CD4-positive, alpha-beta T cell (primary cell): ENCODE measurements at regions of chr22 and their contacts with region 1.

Region 1: DNA sequence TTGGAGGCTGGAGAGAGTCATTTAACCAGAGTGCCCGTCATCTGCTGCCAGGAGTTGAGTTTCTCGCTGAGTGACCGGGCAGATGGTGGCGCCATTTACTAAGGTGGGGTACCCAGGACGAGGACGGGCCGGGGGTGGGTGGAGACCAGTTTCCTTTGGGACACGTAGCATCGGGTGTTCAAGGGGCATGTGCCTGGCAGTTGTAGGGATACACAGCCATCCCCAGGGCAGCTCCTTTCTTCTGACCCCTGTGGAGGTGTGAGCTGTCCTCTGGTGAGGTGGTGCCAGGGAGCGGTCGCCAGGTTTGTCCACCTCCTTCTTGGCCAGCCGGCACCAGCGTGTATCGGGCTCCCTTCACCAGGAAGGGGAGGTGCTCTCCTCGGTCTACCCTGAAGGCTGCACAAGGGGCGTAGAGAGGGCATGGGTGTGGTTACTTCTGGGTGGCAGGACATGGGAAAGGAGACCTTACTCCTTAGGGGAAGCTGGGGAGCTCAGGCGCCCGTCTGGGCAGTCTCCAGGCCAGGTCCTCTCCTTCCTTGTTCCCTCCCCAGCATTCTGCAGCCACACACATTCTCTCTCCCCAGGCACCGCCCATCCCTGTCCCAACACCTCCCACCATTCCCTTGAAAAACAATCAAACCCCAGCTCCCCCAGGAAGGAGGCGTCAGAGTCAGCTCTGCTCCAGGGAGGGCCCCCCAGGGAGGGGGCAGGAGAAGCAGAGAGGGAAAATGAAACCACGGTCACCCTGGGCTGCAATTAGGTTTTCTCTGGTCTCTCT is 10.3 kb upstream of the MB start:
- DNase-seq: peak; percentile 26 to 76 (median 45)
- ATAC-seq: peak; percentile 62
- H3K4me3 ChIP-seq: peak overlapping the region; percentile 54
- H3K4me3 Mint-ChIP-seq: peak overlapping the region; percentile 79
- H3K27ac ChIP-seq: no peak overlapping the region
- H3K27ac Mint-ChIP-seq: no peak overlapping the region
- H3K4me1 ChIP-seq: peaks cover 21% of the 10 kb centered on the region
- H3K4me1 Mint-ChIP-seq: peaks cover 23% of the 10 kb centered on the region
- H3K27me3 ChIP-seq: no peaks in the 10 kb centered on the region
- H3K27me3 Mint-ChIP-seq: peaks cover 9% of the 10 kb centered on the region
- CTCF ChIP-seq: peak; percentile 49

Region 2: GRCh38 chr22:35506259-35506570 is 121.2 kb before region 1 on chr22:
- CTCF ChIA-PET with region 1: no interaction called
- POLR2A ChIA-PET with region 1: no interaction called
- intact Hi-C with region 1: no loop called
- DNase-seq: no peak
- ATAC-seq: no peak
- H3K4me3 ChIP-seq: no peak overlapping the region
- H3K4me3 Mint-ChIP-seq: no peak overlapping the region
- H3K27ac ChIP-seq: no peak overlapping the region
- H3K27ac Mint-ChIP-seq: no peak overlapping the region
- H3K4me1 ChIP-seq: no peaks in the 10 kb centered on the region
- H3K4me1 Mint-ChIP-seq: no peaks in the 10 kb centered on the region
- H3K27me3 ChIP-seq: peaks cover 9 to 10% of the 10 kb centered on the region in 2 experiments
- H3K27me3 Mint-ChIP-seq: peaks cover 10% of the 10 kb centered on the region
- CTCF ChIP-seq: no peak

Region 3: DNA sequence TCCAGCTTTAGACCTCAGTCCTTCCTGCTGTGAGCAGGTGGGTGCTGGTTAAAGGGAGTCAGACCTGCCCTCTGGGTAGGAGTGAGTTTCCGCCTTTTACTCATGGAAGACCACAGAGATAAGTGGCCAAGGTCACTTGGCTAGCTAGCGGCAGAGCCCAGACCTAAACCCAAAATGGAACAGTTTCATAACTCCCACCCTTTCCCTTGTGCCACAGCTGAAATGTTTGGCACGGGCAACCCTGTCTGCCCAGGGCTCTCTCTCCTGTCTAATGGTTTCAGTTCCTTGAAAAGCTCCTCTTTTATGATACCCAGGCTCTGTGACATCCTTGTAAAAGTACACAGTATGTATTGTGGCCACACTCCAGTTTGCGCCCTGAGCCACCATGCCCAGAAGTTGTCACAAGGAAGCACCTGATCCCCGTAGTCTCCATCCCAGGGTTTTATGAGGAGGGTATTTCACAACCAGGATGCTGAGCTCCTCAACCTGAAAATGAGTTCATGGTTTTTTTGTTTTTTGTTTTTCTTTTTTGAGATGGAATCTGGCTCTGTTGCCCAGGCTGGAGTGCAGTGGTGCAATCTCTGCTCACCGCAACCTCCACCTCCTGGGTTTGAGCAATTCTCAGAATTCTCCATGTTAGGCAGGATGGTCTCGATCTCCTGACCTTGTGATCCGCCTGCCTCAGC is 15.4 kb before region 1 on chr22:
- CTCF ChIA-PET with region 1: no interaction called
- POLR2A ChIA-PET with region 1: no interaction called
- intact Hi-C with region 1: no loop called
- DNase-seq: no peak
- ATAC-seq: no peak
- H3K4me3 ChIP-seq: no peak overlapping the region
- H3K4me3 Mint-ChIP-seq: no peak overlapping the region
- H3K27ac ChIP-seq: no peak overlapping the region
- H3K27ac Mint-ChIP-seq: no peak overlapping the region
- H3K4me1 ChIP-seq: peaks cover 16% of the 10 kb centered on the region
- H3K4me1 Mint-ChIP-seq: no peaks in the 10 kb centered on the region
- H3K27me3 ChIP-seq: peaks cover 2 to 4% of the 10 kb centered on the region in 2 experiments
- H3K27me3 Mint-ChIP-seq: peaks cover 6% of the 10 kb centered on the region
- CTCF ChIP-seq: no peak

Region 4: GRCh38 chr22:35660291-35661127 is 33.1 kb after region 1 on chr22:
- CTCF ChIA-PET with region 1: no interaction called
- POLR2A ChIA-PET with region 1: interaction called, 3 read pairs
- intact Hi-C with region 1: loop called in 1 of 2 experiments (anchors 5 kb)
- DNase-seq: peak; percentile 47 to 91 (median 62)
- ATAC-seq: peak; percentile 89
- H3K4me3 ChIP-seq: peak overlapping the region; percentile 0
- H3K4me3 Mint-ChIP-seq: peak overlapping the region; percentile 30
- H3K27ac ChIP-seq: peak overlapping the region; percentile 92 to 93
- H3K27ac Mint-ChIP-seq: peak overlapping the region; percentile 98
- H3K4me1 ChIP-seq: peaks cover 57% of the 10 kb centered on the region
- H3K4me1 Mint-ChIP-seq: peaks cover 76% of the 10 kb centered on the region
- H3K27me3 ChIP-seq: no peaks in the 10 kb centered on the region
- H3K27me3 Mint-ChIP-seq: no peaks in the 10 kb centered on the region
- CTCF ChIP-seq: no peak

Region 5: DNA sequence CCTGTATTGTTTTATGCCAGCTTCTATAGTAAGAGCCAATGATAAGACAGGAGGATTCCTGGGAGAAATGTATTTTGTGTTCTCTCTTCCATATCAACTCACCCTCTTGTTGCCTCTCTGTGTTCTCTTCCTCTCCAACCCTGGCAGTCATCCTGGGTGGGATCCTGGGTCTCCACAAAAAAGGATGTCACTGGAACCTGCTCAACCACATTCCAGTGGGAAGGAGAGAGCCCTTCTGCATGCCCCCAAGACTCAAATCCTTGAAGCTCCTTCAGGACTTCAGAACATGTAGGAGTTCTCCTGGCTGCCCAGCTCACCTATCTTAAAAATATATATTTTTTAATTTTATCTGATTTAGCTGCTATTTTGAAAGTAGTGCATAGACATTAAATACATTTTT is 46.9 kb after region 1 on chr22:
- CTCF ChIA-PET with region 1: no interaction called
- POLR2A ChIA-PET with region 1: no interaction called
- intact Hi-C with region 1: no loop called
- DNase-seq: no peak
- ATAC-seq: no peak
- H3K4me3 ChIP-seq: no peak overlapping the region
- H3K4me3 Mint-ChIP-seq: no peak overlapping the region
- H3K27ac ChIP-seq: no peak overlapping the region
- H3K27ac Mint-ChIP-seq: no peak overlapping the region
- H3K4me1 ChIP-seq: no peaks in the 10 kb centered on the region
- H3K4me1 Mint-ChIP-seq: no peaks in the 10 kb centered on the region
- H3K27me3 ChIP-seq: no peaks in the 10 kb centered on the region
- H3K27me3 Mint-ChIP-seq: no peaks in the 10 kb centered on the region
- CTCF ChIP-seq: no peak

Region 6: GRCh38 chr22:35705141-35705540 is 77.7 kb after region 1 on chr22:
- CTCF ChIA-PET with region 1: no interaction called
- POLR2A ChIA-PET with region 1: no interaction called
- intact Hi-C with region 1: no loop called
- DNase-seq: no peak
- ATAC-seq: no peak
- H3K4me3 ChIP-seq: no peak overlapping the region
- H3K4me3 Mint-ChIP-seq: no peak overlapping the region
- H3K27ac ChIP-seq: no peak overlapping the region
- H3K27ac Mint-ChIP-seq: no peak overlapping the region
- H3K4me1 ChIP-seq: no peaks in the 10 kb centered on the region
- H3K4me1 Mint-ChIP-seq: no peaks in the 10 kb centered on the region
- H3K27me3 ChIP-seq: no peaks in the 10 kb centered on the region
- H3K27me3 Mint-ChIP-seq: peaks cover under 1% of the 10 kb centered on the region
- CTCF ChIP-seq: no peak

Region 7: DNA sequence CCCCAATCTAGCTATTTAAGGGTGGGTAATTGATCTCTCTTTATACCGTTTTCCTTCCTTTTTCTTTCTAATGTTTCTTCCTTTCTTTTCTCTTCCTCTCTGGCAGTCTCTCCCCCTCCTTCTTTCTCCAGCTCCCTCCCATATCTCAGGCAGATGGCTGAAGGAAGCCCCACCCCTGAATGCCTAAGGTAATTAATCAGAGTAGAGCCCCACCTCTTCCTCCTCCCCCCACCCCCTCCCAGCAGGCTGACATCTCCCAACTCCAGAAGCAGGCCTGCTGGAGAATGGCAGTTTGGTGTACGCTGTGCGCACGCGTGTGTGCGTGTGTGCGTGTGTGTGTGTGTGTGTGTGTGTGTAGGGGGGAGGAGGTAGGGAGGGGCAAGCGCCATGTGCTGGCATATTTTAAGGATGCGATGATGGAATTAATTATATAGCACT is 212.9 kb after region 1 on chr22:
- CTCF ChIA-PET with region 1: no interaction called
- POLR2A ChIA-PET with region 1: no interaction called
- intact Hi-C with region 1: loop called in 1 of 2 experiments (anchors 5 kb)
- DNase-seq: peak in 2 of 14 experiments; percentile 28 to 37
- ATAC-seq: no peak
- H3K4me3 ChIP-seq: no peak overlapping the region
- H3K4me3 Mint-ChIP-seq: no peak overlapping the region
- H3K27ac ChIP-seq: no peak overlapping the region
- H3K27ac Mint-ChIP-seq: no peak overlapping the region
- H3K4me1 ChIP-seq: peaks cover 3% of the 10 kb centered on the region
- H3K4me1 Mint-ChIP-seq: peaks cover 17% of the 10 kb centered on the region
- H3K27me3 ChIP-seq: peaks cover 0 to 10% of the 10 kb centered on the region in 2 experiments
- H3K27me3 Mint-ChIP-seq: peaks cover 26% of the 10 kb centered on the region
- CTCF ChIP-seq: no peak

Region 8: GRCh38 chr22:36065775-36066559 is 438.5 kb after region 1 on chr22:
- CTCF ChIA-PET with region 1: no interaction called
- POLR2A ChIA-PET with region 1: no interaction called
- intact Hi-C with region 1: loop called in 1 of 2 experiments (anchors 2 kb)
- DNase-seq: peak; percentile 34 to 79 (median 52)
- ATAC-seq: peak; percentile 86
- H3K4me3 ChIP-seq: peak overlapping the region; percentile 50
- H3K4me3 Mint-ChIP-seq: peak overlapping the region; percentile 85
- H3K27ac ChIP-seq: no peak overlapping the region
- H3K27ac Mint-ChIP-seq: no peak overlapping the region
- H3K4me1 ChIP-seq: peaks cover 17% of the 10 kb centered on the region
- H3K4me1 Mint-ChIP-seq: peaks cover 5% of the 10 kb centered on the region
- H3K27me3 ChIP-seq: no peaks in the 10 kb centered on the region
- H3K27me3 Mint-ChIP-seq: no peaks in the 10 kb centered on the region
- CTCF ChIP-seq: peak; percentile 100

Region 9: GRCh38 chr22:36180038-36180880 is 552.8 kb after region 1 on chr22:
- CTCF ChIA-PET with region 1: no interaction called
- POLR2A ChIA-PET with region 1: no interaction called
- intact Hi-C with region 1: loop called in 1 of 2 experiments (anchors 5 kb)
- DNase-seq: peak; percentile 76 to 94 (median 85)
- ATAC-seq: peak; percentile 100
- H3K4me3 ChIP-seq: no peak overlapping the region
- H3K4me3 Mint-ChIP-seq: no peak overlapping the region
- H3K27ac ChIP-seq: no peak overlapping the region
- H3K27ac Mint-ChIP-seq: no peak overlapping the region
- H3K4me1 ChIP-seq: peaks cover 7% of the 10 kb centered on the region
- H3K4me1 Mint-ChIP-seq: peaks cover 6% of the 10 kb centered on the region
- H3K27me3 ChIP-seq: peaks cover 0 to 2% of the 10 kb centered on the region in 2 experiments
- H3K27me3 Mint-ChIP-seq: no peaks in the 10 kb centered on the region
- CTCF ChIP-seq: peak; percentile 81